AG04449 (cell line): ENCODE measurements at regions of chr2 and their contacts with region 1.

Region 1: GRCh38 chr2:201158111-201158929 is 24.6 kb upstream of the CASP10 start:
- DNase-seq: no peak
- H3K4me3 ChIP-seq: no peak overlapping the region
- CTCF ChIP-seq: peak; percentile 57

Region 2: DNA sequence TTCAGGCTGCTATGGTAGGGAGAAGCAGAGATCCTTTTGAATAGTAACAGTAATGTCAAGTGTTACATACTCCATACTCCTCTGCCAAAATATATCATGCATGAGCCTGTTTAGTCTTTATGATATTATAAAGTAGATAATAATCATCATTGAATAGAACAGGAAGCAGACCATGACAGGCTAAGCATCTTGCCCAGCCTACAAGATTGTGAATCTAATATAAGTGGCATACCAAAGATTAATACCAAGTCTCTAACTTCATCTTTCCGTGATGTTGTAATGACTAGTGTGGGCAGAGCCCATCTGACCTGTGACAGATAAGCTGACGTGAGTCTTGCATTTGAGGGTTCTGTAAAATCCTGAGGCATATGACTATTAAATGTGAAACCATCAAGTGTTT is 73.5 kb before region 1 on chr2:
- CTCF ChIA-PET with region 1: interaction called, 19 read pairs
- POLR2A ChIA-PET with region 1: no interaction called
- DNase-seq: no peak
- H3K4me3 ChIP-seq: no peak overlapping the region
- CTCF ChIP-seq: no peak

Region 3: GRCh38 chr2:201118121-201118960 is 40.0 kb before region 1 on chr2:
- CTCF ChIA-PET with region 1: interaction called, 90 read pairs
- POLR2A ChIA-PET with region 1: interaction called, 4 read pairs
- DNase-seq: no peak
- H3K4me3 ChIP-seq: peak overlapping the region; percentile 61
- CTCF ChIP-seq: peak; percentile 50

Region 4: GRCh38 chr2:201144101-201145051 is 13.9 kb before region 1 on chr2:
- CTCF ChIA-PET with region 1: interaction called, 27 read pairs
- POLR2A ChIA-PET with region 1: interaction called, 3 read pairs
- DNase-seq: no peak
- H3K4me3 ChIP-seq: no peak overlapping the region
- CTCF ChIP-seq: no peak

Region 5: GRCh38 chr2:201182650-201183364 is 24.5 kb after region 1 on chr2 and contains the start of gene CASP10:
- CTCF ChIA-PET with region 1: interaction called, 13 read pairs
- POLR2A ChIA-PET with region 1: no interaction called
- DNase-seq: no peak
- H3K4me3 ChIP-seq: no peak within 1 kb of the TSS
- CTCF ChIP-seq: no peak